Mammary epithelial cell (primary cell): ENCODE measurements at regions of chr3 and their contacts with region 1.

Region 1: GRCh38 chr3:901953-902778 is 190.7 kb upstream of the CNTN6 start:
- DNase-seq: peak; percentile 5
- H3K4me3 ChIP-seq: no peak overlapping the region
- H3K27ac ChIP-seq: no peak overlapping the region
- H3K4me1 ChIP-seq: no peaks in the 10 kb centered on the region
- H3K27me3 ChIP-seq: no peaks in the 10 kb centered on the region
- CTCF ChIP-seq: peak; percentile 49 to 57

Region 2: GRCh38 chr3:851098-851795 is 50.9 kb before region 1 on chr3:
- CTCF ChIA-PET with region 1: no interaction called
- dilution Hi-C with region 1: no loop called
- in situ Hi-C with region 1: no loop called
- intact Hi-C with region 1: loop called (anchors 5 kb)
- DNase-seq: peak; percentile 63
- H3K4me3 ChIP-seq: no peak overlapping the region
- H3K27ac ChIP-seq: no peak overlapping the region
- H3K4me1 ChIP-seq: no peaks in the 10 kb centered on the region
- H3K27me3 ChIP-seq: no peaks in the 10 kb centered on the region
- CTCF ChIP-seq: peak in 1 of 2 donors; percentile 41

Region 3: GRCh38 chr3:1195947-1196346 is 293.8 kb after region 1 on chr3:
- CTCF ChIA-PET with region 1: no interaction called
- dilution Hi-C with region 1: no loop called
- in situ Hi-C with region 1: no loop called
- intact Hi-C with region 1: no loop called
- DNase-seq: peak; percentile 12
- H3K4me3 ChIP-seq: no peak overlapping the region
- H3K27ac ChIP-seq: no peak overlapping the region
- H3K4me1 ChIP-seq: no peaks in the 10 kb centered on the region
- H3K27me3 ChIP-seq: no peaks in the 10 kb centered on the region
- CTCF ChIP-seq: no peak